Panc1 (cell line): ENCODE measurements at regions of chr3 and their contacts with region 1.

Region 1: DNA sequence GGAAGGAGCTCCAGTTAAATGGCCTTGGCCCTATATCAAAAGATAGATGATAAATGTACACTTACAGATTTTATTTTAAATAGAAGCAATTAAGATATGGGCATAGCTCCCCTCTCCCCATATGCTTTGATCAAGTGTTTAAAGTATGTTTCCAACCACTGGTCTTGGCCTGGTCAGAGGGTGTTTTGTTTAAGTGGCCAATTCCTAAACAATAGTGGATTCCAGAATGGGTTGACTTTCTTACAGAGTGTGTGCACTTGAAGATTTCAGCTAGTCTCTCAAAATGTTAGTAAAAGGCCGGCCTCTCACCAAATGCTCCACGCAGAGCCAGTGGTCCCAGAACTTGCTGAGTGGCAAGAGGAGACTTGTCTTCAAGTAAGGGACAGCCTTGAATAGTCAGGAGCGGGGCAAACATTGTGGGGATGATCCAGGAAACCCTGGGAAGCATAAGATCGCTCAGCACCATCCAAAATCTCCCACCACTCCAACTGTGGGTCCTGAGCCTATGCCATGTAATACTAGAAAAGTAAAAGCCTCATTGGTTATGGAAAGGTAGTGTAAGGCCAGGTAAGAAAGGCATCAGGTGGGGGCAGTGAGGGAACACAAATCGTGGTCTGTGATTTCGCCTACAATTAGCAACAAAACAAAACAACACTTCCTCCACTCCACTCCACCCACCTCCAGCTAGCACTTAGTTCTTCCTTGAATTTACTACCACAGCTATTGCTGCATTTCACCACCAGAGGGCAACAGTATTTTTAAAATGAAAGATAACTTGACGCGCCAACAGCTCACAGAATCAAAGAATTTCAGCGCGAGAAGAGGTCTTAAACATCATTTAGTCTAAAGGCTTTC is 4.8 kb downstream of the RARRES1 start:
- DNase-seq: no peak
- ATAC-seq: peak; percentile 12; the same call in 1 of the 2 replicates
- H3K4me3 ChIP-seq: no peak overlapping the region
- H3K27ac ChIP-seq: peak overlapping the region; percentile 94
- H3K4me1 ChIP-seq: peaks cover 69% of the 10 kb centered on the region
- H3K27me3 ChIP-seq: no peaks in the 10 kb centered on the region
- CTCF ChIP-seq: peak; percentile 89

Region 2: GRCh38 chr3:158748237-158748828 is 20.9 kb after region 1 on chr3:
- CTCF ChIA-PET with region 1: interaction called, 17 read pairs
- POLR2A ChIA-PET with region 1: no interaction called
- in situ Hi-C with region 1: no loop called
- intact Hi-C with region 1: no loop called
- DNase-seq: no peak
- ATAC-seq: 0 out of 2 replicates have a peak, but pooled peaks have one; percentile 17
- H3K4me3 ChIP-seq: no peak overlapping the region
- H3K27ac ChIP-seq: no peak overlapping the region
- H3K4me1 ChIP-seq: no peaks in the 10 kb centered on the region
- H3K27me3 ChIP-seq: no peaks in the 10 kb centered on the region
- CTCF ChIP-seq: no peak

Region 3: GRCh38 chr3:159029306-159030026 is 302.0 kb after region 1 on chr3:
- CTCF ChIA-PET with region 1: no interaction called
- POLR2A ChIA-PET with region 1: no interaction called
- in situ Hi-C with region 1: no loop called
- intact Hi-C with region 1: no loop called
- DNase-seq: no peak
- ATAC-seq: no peak
- H3K4me3 ChIP-seq: no peak overlapping the region
- H3K27ac ChIP-seq: no peak overlapping the region
- H3K4me1 ChIP-seq: no peaks in the 10 kb centered on the region
- H3K27me3 ChIP-seq: no peaks in the 10 kb centered on the region
- CTCF ChIP-seq: no peak

Region 4: DNA sequence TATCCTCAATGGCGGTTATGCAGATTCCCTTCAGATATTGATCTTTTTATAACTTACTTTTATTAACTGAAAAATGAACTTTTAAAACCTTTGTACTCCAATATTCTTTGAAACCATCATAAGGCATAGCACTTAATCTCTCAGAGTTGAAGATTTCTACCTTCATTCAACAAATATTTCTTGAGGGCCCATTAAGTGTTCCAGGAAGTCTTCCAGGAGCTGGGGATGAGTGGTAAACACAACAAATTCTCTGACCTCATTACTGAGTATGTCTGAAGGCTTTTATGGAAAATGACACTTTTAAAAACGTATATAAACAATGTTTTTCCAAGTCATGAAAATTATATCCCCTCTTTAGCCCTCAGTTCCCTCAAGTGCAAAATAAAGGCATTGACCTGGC is 685.9 kb after region 1 on chr3:
- CTCF ChIA-PET with region 1: no interaction called
- POLR2A ChIA-PET with region 1: no interaction called
- in situ Hi-C with region 1: no loop called
- intact Hi-C with region 1: no loop called
- DNase-seq: no peak
- ATAC-seq: no peak
- H3K4me3 ChIP-seq: no peak overlapping the region
- H3K27ac ChIP-seq: no peak overlapping the region
- H3K4me1 ChIP-seq: no peaks in the 10 kb centered on the region
- H3K27me3 ChIP-seq: no peaks in the 10 kb centered on the region
- CTCF ChIP-seq: no peak